Vagina (tissue), 2 donors: ENCODE measurements at regions of chr2 and their contacts with region 1.

Region 1: GRCh38 chr2:239049421-239050251 is 201.8 kb downstream of the TWIST2 start:
- DNase-seq: no peak
- H3K4me3 ChIP-seq: no peak overlapping the region
- H3K27ac ChIP-seq: no peak overlapping the region
- H3K4me1 ChIP-seq: no peaks in the 10 kb centered on the region
- H3K27me3 ChIP-seq: no peaks in the 10 kb centered on the region
- CTCF ChIP-seq: no peak
- POLR2A ChIP-seq: no peak

Region 2: GRCh38 chr2:239873656-239874635 is 824.3 kb after region 1 on chr2:
- intact Hi-C with region 1: loop called (anchors 10 kb)
- DNase-seq: peak; percentile 72 to 84
- H3K4me3 ChIP-seq: no peak overlapping the region
- H3K27ac ChIP-seq: no peak overlapping the region
- H3K4me1 ChIP-seq: no peaks in the 10 kb centered on the region
- H3K27me3 ChIP-seq: no peaks in the 10 kb centered on the region
- CTCF ChIP-seq: no peak
- POLR2A ChIP-seq: no peak